ENCODE measurements at regions of chr19 and their contacts with region 1.

Region 1: GRCh38 chr19:13002166-13002898 is 7.1 kb downstream of the NFIX start:
- DNase-seq: peak; percentile 72 to 87 (median 76)
- ATAC-seq: peak; percentile 67 to 81 (median 74)
- H3K4me3 ChIP-seq: peak overlapping the region in 11 of 12 donors; percentile 8 to 51 (median 38)
- H3K27ac ChIP-seq: peak overlapping the region; percentile 80 to 97 (median 92)
- H3K4me1 ChIP-seq: peaks cover 0 to 80% (median 37%) of the 10 kb centered on the region in 12 donors
- H3K27me3 ChIP-seq: no peaks in the 10 kb centered on the region
- CTCF ChIP-seq: peak in 7 of 12 donors; percentile 7 to 51 (median 32)
- POLR2A ChIP-seq: no peak

Region 2: DNA sequence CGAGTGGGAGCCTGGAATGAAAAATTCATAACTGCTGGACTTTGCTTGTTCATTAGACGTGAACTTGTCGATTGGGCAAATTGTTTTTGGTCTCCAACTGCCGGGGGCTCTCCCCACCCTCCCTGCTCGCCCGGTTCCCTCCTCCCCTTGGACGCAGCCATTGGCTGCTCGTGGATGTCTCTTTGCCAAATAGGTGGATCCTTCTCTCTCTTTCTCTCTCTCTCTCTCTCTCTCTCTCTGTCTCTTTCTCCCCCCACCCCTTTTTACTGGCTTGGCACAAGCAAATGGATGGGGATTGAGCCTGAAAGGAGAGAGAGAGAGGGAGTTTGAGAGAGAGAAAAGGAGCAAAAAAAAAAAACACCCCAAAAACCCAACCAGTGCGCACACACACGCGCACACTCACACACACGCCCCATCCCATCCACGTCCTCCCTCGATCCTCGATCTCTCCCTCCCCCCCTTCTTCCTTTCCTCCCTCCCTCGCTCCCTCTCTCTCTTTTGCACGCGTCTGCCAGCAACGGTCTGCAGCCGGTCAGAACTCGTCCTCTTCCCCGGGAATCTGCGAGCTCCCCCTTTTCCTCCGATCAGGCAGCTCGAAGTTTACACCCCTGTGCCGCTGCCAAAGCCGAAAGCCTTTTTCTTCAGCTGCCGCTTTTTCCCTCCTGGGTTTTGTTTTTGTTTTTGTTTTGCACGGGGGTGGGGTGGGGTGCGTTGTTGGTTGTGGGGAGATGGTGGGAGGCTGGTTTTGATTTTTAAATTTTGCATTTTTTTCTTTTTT is 20.7 kb after region 1 on chr19:
- intact Hi-C with region 1: loop called in 1 of 10 experiments (anchors 2 kb)
- DNase-seq: peak; percentile 88 to 93 (median 90)
- ATAC-seq: peak; percentile 83 to 89 (median 84)
- H3K4me3 ChIP-seq: peak overlapping the region in 11 of 12 donors; percentile 24 to 64 (median 50)
- H3K27ac ChIP-seq: peak overlapping the region; percentile 86 to 97 (median 93)
- H3K4me1 ChIP-seq: peaks cover 8 to 97% (median 81%) of the 10 kb centered on the region in 12 donors
- H3K27me3 ChIP-seq: peaks cover 0 to 11% (median 0%) of the 10 kb centered on the region in 9 donors
- CTCF ChIP-seq: peak in 2 of 12 donors; percentile 2 to 3
- POLR2A ChIP-seq: no peak